ENCODE measurements at regions of chr22 and their contacts with region 1.

Region 1: DNA sequence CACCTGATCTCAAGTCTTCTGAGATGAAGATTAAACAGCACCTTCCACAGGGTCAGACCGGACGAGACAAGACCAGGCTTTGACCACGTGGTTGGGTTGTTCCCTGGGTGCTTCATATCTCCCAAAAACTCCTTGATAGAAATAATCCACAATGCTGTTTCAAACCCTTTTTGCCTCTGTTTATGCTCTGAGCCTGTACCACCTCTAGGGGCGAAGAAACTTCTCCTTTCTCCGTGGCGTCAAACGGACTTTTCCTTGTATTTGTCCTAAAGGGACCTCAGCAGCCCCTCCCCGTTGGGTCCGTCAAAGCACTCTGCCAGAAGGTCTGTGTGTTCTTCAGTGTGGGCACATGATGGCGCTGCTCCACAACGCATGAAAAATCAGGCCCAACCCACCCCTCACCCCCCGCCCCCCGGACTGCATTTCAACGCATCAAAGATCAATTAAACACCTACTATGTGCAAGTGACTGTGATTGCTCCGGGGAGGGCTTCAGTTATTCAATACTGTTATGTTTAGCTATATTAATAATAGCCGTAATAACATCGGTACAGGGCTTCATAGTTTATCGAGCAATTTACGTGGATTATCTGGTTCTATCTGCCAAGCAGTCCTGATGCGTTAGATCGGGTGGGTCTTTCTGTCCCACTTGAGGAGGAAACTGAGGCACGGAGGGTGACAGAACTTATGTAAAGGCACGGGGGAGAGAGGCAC is 17.3 kb upstream of the EIF3D start:
- DNase-seq: no peak
- H3K4me3 ChIP-seq: no peak overlapping the region
- H3K27ac ChIP-seq: no peak overlapping the region
- H3K4me1 ChIP-seq: no peaks in the 10 kb centered on the region
- H3K27me3 ChIP-seq: no peaks in the 10 kb centered on the region
- CTCF ChIP-seq: peak; percentile 37

Region 2: DNA sequence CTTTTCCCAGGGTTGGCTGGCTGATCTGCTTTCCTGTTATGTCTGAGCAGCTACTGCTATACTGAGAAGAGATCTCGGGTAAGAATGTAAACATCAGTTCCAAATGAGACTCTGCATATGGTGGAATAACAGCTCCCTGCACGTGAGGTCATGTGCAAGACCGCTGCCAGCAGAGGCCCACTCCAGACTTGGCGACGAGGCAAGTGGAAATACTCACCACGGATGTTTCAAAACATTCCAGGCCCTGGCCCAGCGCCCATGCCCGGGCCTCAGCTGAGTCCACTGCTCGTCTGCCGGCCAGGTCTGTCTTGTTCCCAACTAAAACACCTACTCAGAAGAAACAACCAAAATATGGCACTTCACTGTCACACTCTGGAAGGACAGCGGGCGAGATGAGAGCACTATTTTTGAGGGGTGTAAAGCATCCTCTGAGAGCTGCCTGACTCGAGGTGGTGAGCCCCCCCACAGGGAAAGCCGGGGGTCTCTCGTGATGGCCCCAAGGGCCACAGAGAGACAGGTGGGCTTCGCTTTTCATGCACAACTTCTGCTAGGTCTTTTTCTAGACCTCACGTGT is 216.5 kb after region 1 on chr22:
- intact Hi-C with region 1: loop called (anchors 10 kb)
- DNase-seq: no peak
- H3K4me3 ChIP-seq: no peak overlapping the region
- H3K27ac ChIP-seq: no peak overlapping the region
- H3K4me1 ChIP-seq: no peaks in the 10 kb centered on the region
- H3K27me3 ChIP-seq: no peaks in the 10 kb centered on the region
- CTCF ChIP-seq: no peak

Region 3: DNA sequence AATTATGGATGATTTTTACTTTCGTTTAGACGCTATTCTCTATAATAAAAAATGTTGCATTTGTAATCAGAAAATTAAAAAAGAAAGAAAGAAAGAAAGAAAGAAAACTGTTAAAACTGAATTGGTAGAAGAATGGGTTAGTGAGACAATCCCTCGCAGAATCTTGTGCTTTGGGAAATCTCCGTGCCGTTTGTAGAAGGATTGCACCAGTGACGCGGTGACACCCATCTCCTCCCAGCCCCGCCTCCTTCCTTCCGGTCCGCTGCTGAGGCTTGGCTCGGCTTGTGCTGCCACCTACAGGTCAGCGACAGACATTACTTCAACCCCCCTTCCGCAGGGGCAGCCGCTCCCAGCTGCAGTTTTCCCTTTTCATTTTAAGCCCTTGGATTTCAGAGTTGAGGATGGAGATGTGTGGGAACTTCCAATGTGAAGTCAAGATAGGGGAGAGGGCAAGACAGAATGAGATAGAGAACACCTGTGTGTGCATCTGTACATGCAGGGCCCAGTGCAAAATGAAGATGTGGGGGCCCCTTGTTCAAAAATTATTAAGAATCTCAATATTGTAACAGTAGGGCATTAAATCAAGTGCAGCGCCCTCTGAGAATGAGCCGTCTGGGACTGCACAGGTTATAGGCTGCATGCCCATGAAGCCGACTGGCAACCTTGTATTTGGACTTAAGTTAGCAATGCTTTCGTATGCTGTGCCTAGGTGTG is 431.9 kb after region 1 on chr22:
- intact Hi-C with region 1: loop called (anchors 5 kb)
- DNase-seq: peak; percentile 92
- H3K4me3 ChIP-seq: peak overlapping the region; percentile 8
- H3K27ac ChIP-seq: no peak overlapping the region
- H3K4me1 ChIP-seq: no peaks in the 10 kb centered on the region
- H3K27me3 ChIP-seq: no peaks in the 10 kb centered on the region
- CTCF ChIP-seq: peak; percentile 88